ENCODE measurements at regions of chr2 and their contacts with region 1.

Region 1: DNA sequence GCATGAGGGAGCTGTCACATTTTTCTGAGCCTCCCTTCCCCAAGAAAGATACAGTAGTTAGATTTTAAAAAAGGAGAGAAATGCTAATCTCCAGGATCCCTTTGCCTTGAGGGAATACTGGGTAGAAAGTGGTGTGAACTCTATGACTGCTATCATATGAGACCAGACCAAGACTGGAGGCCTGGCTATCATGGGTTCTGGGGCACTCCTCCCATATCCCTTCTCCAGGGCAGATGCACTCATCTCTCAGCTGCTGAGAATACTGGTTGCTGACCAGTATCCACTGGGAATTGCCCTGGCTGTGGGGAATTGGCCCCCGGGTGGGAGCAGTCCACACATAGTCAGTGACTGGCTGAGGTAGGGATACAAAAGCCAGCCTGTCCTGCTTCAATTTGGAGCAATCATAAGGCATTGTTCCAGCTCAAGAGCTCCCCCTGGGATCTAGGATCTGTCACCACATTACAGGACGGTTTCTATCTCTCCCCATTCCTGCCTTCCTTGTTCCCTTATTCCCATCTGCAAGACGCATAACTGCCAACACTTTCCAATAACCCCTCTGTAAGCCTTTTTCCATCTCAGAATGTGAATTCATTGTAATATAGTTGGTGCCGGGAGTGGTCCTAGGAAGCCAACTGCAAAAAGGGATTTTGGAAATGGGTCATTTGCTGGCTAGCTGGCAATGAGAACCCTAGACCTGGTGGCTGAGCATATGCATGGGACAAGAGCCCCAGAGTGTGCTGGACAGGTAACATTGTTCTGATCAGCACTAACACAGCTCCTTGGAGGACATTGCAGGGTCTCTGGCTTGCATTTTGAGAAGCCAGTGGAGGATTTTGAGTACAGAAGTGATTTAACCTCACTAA is 35.4 kb upstream of the REEP1 start:
- DNase-seq: no peak
- H3K4me3 ChIP-seq: no peak overlapping the region
- H3K27ac ChIP-seq: no peak overlapping the region
- H3K4me1 ChIP-seq: no peaks in the 10 kb centered on the region
- H3K27me3 ChIP-seq: no peaks in the 10 kb centered on the region
- CTCF ChIP-seq: peak; percentile 24 to 59 (median 41)
- POLR2A ChIP-seq: no peak

Region 2: GRCh38 chr2:85988175-85988913 is 384.5 kb before region 1 on chr2:
- intact Hi-C with region 1: loop called (anchors 10 kb)
- DNase-seq: no peak
- H3K4me3 ChIP-seq: no peak overlapping the region
- H3K27ac ChIP-seq: peak overlapping the region; percentile 58 to 82
- H3K4me1 ChIP-seq: no peaks in the 10 kb centered on the region
- H3K27me3 ChIP-seq: no peaks in the 10 kb centered on the region
- CTCF ChIP-seq: no peak
- POLR2A ChIP-seq: no peak

Region 3: DNA sequence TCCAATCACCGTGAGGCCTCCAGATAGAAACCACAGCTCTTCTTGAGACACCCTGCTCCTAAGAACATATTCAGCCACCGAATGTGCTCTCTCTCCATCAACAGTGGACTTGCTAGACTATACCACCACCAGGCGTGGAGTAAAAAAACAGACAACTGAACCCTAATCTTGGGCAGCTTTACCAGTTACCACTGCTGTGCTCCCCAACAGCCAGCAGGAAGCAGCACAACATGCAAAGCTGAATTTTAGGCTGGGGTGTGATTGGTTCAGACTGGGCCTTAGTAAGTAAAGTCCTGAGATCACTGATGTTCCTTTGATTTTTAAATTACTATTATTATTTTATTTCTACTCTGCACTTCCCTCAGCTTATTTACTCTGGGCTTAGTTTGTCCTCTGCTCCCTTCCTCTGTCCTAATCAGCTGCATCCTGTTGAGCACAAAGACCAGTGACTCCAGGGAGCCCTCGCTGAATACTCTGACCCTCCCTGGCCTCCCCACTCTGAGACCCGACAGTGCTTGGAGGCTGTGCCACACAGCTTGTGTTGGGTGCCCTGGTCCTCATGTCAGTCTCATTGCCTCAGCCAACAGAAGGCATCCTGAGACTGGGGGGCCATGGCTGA is 151.7 kb before region 1 on chr2:
- intact Hi-C with region 1: loop called (anchors 5 kb)
- DNase-seq: no peak
- H3K4me3 ChIP-seq: no peak overlapping the region
- H3K27ac ChIP-seq: no peak overlapping the region
- H3K4me1 ChIP-seq: peaks cover 0 to 7% of the 10 kb centered on the region in 2 donors
- H3K27me3 ChIP-seq: no peaks in the 10 kb centered on the region
- CTCF ChIP-seq: peak; percentile 44 to 79 (median 73)
- POLR2A ChIP-seq: no peak